Naive thymus-derived CD4-positive, alpha-beta T cell (primary cell): ENCODE measurements at regions of chr4 and their contacts with region 1.

Region 1: DNA sequence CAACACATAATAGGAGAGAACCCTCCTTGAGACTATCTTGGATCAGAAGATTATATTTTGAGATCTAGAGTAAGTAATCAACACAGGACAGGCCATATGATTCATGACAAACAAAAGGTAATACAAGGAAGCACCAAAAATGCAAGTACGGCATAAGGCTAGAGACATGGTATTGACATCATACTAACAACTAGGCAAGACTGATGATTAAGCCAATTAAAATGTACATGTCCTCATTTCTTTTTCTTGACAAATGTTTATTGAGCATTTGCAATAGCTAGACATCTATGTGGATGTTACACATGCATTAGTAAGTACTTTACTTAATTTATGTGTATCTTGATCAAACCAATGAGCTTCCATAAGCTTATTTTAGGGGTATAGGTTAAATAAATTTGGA is 695.7 kb upstream of the GALNTL6 start:
- DNase-seq: no peak
- ATAC-seq: no peak
- H3K4me3 ChIP-seq: no peak overlapping the region
- H3K4me3 Mint-ChIP-seq: no peak overlapping the region
- H3K27ac ChIP-seq: no peak overlapping the region
- H3K27ac Mint-ChIP-seq: no peak overlapping the region
- H3K4me1 ChIP-seq: no peaks in the 10 kb centered on the region
- H3K4me1 Mint-ChIP-seq: no peaks in the 10 kb centered on the region
- H3K27me3 ChIP-seq: no peaks in the 10 kb centered on the region
- H3K27me3 Mint-ChIP-seq: no peaks in the 10 kb centered on the region

Region 2: DNA sequence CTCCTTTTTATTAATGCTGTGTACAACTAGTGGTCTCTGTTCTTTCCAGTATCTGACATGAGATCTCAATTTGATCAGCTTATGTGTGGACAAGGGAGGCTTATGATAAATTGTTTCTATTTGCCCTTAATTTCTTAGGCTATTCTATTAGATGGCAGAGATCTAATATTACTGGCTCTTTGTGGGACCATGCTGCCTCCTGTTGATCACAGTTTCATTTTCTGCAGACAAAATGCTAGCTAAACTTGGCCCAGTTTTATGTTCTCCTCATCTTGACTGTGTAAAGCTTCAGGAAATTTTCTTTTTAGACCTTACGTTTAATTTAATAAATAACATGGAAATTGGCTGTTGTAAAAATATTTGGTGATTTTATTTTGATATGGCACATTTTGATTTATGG is 400.6 kb before region 1 on chr4:
- CTCF ChIA-PET with region 1: no interaction called
- POLR2A ChIA-PET with region 1: no interaction called
- intact Hi-C with region 1: loop called in 1 of 2 experiments (anchors 5 kb)
- DNase-seq: no peak
- ATAC-seq: no peak
- H3K4me3 ChIP-seq: no peak overlapping the region
- H3K4me3 Mint-ChIP-seq: no peak overlapping the region
- H3K27ac ChIP-seq: no peak overlapping the region
- H3K27ac Mint-ChIP-seq: no peak overlapping the region
- H3K4me1 ChIP-seq: no peaks in the 10 kb centered on the region
- H3K4me1 Mint-ChIP-seq: no peaks in the 10 kb centered on the region
- H3K27me3 ChIP-seq: no peaks in the 10 kb centered on the region
- H3K27me3 Mint-ChIP-seq: no peaks in the 10 kb centered on the region

Region 3: GRCh38 chr4:171002246-171002645 is 115.2 kb before region 1 on chr4:
- CTCF ChIA-PET with region 1: no interaction called
- POLR2A ChIA-PET with region 1: no interaction called
- intact Hi-C with region 1: no loop called
- DNase-seq: no peak
- ATAC-seq: no peak
- H3K4me3 ChIP-seq: no peak overlapping the region
- H3K4me3 Mint-ChIP-seq: no peak overlapping the region
- H3K27ac ChIP-seq: no peak overlapping the region
- H3K27ac Mint-ChIP-seq: no peak overlapping the region
- H3K4me1 ChIP-seq: no peaks in the 10 kb centered on the region
- H3K4me1 Mint-ChIP-seq: peaks cover 0 to 1% (median 0%) of the 10 kb centered on the region in 7 donors
- H3K27me3 ChIP-seq: no peaks in the 10 kb centered on the region
- H3K27me3 Mint-ChIP-seq: no peaks in the 10 kb centered on the region

Region 4: DNA sequence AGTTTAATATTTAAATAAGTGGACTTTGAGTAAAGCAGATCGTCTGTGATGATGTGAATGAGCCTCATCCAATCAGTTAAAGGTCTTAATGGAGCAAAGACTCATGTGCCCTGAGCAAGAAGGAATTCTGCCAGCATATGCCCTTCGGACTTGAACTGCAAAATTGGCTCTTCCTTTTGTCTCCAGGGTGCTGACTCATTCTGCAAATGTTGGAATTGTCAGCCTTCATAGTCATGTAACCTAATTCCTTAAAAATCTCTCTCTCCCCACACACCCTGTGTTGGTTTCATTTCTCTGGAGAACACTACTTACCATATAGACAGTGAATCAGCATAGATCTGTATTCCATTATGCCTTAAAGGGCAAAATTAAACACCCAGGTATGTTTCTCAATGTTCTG is 86.0 kb after region 1 on chr4:
- CTCF ChIA-PET with region 1: no interaction called
- POLR2A ChIA-PET with region 1: no interaction called
- intact Hi-C with region 1: no loop called
- DNase-seq: no peak
- ATAC-seq: no peak
- H3K4me3 ChIP-seq: no peak overlapping the region
- H3K4me3 Mint-ChIP-seq: no peak overlapping the region
- H3K27ac ChIP-seq: no peak overlapping the region
- H3K27ac Mint-ChIP-seq: no peak overlapping the region
- H3K4me1 ChIP-seq: no peaks in the 10 kb centered on the region
- H3K4me1 Mint-ChIP-seq: no peaks in the 10 kb centered on the region
- H3K27me3 ChIP-seq: no peaks in the 10 kb centered on the region
- H3K27me3 Mint-ChIP-seq: no peaks in the 10 kb centered on the region